ENCODE measurements at regions of chr4 and their contacts with region 1.

Region 1: DNA sequence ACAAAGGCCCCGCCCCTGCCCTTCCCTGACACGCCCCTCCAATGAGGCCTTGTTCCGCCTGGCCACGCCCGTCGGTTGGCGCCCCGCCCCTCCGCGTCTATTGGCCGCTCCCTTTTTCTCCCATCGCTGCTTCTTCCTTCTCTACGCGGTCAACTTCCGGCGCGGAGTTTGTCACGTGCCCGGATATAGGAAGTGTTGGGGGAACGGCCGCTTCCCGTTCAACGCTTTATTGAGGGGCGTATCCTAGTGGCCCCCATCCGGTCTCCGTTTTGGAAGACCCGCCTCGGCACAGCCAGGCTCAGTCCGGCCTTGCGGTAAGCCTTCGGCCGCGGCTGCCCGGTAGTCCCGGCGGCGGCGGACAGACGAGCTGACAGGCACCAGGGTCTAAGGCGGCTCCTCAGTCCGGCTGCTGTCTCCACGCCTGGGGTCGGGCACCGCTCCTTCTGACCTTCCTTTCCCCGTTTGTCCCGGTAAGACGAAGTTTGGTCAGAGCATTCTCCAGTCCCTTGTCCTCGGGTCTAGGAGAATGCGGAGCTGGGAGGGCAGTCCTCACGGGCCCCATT is at the start of gene EXOC1:
- DNase-seq: peak; percentile 99
- H3K4me3 ChIP-seq: peak within 1 kb of the TSS; percentile 87 to 95
- H3K27ac ChIP-seq: peak within 1 kb of the TSS; percentile 89 to 92
- H3K4me1 ChIP-seq: peaks cover 0 to 18% (median 9%) of the 10 kb centered on the region in 4 donors
- H3K27me3 ChIP-seq: peaks cover 0 to 2% of the 10 kb centered on the region in 2 donors
- CTCF ChIP-seq: no peak

Region 2: GRCh38 chr4:55395529-55396307 is 457.8 kb before region 1 on chr4 and contains the start of gene TMEM165:
- intact Hi-C with region 1: loop called (anchors 10 kb)
- DNase-seq: peak; percentile 88 to 95
- H3K4me3 ChIP-seq: peak within 1 kb of the TSS; percentile 74 to 98
- H3K27ac ChIP-seq: peak within 1 kb of the TSS; percentile 98 to 99
- H3K4me1 ChIP-seq: peaks cover 0 to 37% (median 18%) of the 10 kb centered on the region in 4 donors
- H3K27me3 ChIP-seq: no peaks in the 10 kb centered on the region
- CTCF ChIP-seq: no peak

Region 3: GRCh38 chr4:55546756-55547465 is 306.7 kb before region 1 on chr4 and contains the start of gene CLOCK:
- intact Hi-C with region 1: loop called (anchors 5 kb)
- DNase-seq: peak; percentile 79 to 90
- H3K4me3 ChIP-seq: peak within 1 kb of the TSS; percentile 61 to 98
- H3K27ac ChIP-seq: peak within 1 kb of the TSS; percentile 88 to 100
- H3K4me1 ChIP-seq: peaks cover 0 to 19% (median 6%) of the 10 kb centered on the region in 4 donors
- H3K27me3 ChIP-seq: no peaks in the 10 kb centered on the region
- CTCF ChIP-seq: peak; percentile 58